ENCODE measurements at regions of chr11 and their contacts with region 1.

Region 1: DNA sequence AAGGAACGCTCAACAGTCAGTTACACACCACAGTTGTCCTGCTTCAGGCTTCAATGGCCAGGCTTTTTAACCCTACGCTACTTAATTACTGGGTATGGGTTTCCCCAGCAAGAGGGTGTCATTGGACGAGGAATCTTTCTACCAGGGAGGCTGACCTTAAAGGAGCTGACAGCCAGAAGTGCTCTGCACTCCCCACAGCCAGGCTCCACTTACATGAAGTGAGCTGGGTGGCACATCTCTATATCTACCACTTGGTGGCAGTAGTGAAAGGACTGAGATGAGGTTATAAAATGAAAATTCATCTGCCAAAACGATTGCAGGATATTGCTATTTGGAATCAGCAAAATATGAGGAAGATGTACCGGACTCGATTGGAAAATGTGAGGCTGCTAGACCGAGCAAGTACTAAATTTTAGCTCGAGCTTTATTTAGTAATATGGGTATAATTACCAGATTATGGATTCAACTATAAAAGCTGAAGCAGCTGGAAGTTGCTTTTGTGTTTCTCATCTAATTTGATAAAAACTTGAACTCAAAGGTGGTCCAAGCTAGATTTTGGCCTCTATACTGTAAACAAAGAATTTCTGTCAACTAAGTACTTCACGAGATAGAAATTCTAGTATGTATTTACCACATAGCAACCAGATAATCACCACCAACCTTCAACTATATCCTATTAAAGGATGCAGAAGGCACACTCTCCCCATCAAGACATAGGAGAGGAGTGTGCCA is 53.9 kb upstream of the CEP126 start:
- DNase-seq: peak; percentile 36
- H3K4me3 Mint-ChIP-seq: no peak overlapping the region
- H3K27ac Mint-ChIP-seq: no peak overlapping the region
- H3K4me1 Mint-ChIP-seq: no peaks in the 10 kb centered on the region
- H3K27me3 Mint-ChIP-seq: no peaks in the 10 kb centered on the region

Region 2: DNA sequence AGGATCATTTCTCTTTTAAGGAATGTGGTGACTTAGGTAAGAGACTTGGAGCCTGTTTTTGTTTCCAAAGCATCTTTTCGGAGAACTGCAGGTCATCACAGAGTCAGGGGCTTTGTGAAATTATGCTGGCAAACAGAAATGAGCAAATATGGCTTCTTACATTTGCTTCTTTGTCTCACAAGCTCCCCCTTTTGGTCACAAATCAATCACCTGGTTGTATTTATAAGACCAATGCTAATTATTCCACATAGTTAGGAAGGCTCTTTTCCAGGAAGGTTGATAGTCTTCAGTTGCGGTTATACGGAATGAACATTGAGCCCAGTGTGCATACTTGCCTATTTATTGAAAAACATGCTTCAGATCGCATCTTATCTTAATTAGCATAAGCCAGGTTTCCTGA is 19.4 kb after region 1 on chr11:
- CTCF ChIA-PET with region 1: interaction called, 16 read pairs
- DNase-seq: no peak
- H3K4me3 Mint-ChIP-seq: no peak overlapping the region
- H3K27ac Mint-ChIP-seq: no peak overlapping the region
- H3K4me1 Mint-ChIP-seq: no peaks in the 10 kb centered on the region
- H3K27me3 Mint-ChIP-seq: peaks cover 7% of the 10 kb centered on the region

Region 3: GRCh38 chr11:102007567-102008437 is 146.9 kb after region 1 on chr11:
- CTCF ChIA-PET with region 1: interaction called, 116 read pairs
- DNase-seq: no peak
- H3K4me3 Mint-ChIP-seq: no peak overlapping the region
- H3K27ac Mint-ChIP-seq: no peak overlapping the region
- H3K4me1 Mint-ChIP-seq: peaks cover 2% of the 10 kb centered on the region
- H3K27me3 Mint-ChIP-seq: peaks cover 21% of the 10 kb centered on the region